ENCODE measurements at regions of chr5 and their contacts with region 1.

Region 1: DNA sequence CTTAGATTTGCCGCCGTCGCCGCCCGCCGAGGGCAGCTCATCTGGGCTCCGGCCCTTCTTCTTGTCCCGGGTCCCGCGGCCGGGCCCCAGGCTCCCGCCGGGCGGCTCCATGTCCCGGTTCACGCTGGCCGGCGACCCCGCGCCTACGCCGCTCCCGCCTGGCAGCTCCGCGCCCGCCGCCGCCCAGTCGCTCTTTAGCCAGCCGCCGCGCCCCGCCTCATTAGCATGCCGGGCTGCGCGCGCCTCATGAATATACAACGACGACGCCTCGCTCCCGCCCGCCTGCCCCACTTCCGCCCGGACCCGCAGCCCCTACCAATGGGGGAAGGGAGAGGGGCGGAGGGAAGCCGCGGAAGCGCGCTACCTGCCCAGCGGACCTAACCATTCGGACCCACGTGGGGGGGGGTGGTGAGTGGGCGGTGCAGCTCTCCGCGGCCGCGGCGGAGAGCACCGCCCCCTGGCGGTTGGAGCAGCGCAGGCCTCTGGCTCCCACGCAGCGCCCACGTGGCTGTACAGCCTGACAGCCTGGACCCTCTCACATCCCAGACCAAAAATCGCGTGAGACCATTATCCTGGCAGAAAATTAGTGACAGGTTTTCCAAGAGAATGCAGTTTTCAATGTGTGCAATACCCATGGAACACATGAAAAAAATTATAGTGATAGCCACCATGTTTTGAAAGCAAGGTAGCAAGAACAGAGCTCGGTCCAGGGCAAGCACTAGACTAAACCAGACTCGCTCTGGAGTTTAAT is at the start of gene DIAPH1:
- DNase-seq: peak; percentile 99
- H3K4me3 Mint-ChIP-seq: peak within 1 kb of the TSS; percentile 84
- H3K27ac Mint-ChIP-seq: peak within 1 kb of the TSS; percentile 95
- H3K4me1 Mint-ChIP-seq: peaks cover 19% of the 10 kb centered on the region
- H3K27me3 Mint-ChIP-seq: no peaks in the 10 kb centered on the region
- CTCF ChIP-seq: peak; percentile 98
- total RNA-seq, gene DIAPH1: 176 and 219 TPM in 2 replicates

Region 2: GRCh38 chr5:141543053-141543452 is 75.9 kb before region 1 on chr5:
- CTCF ChIA-PET with region 1: no interaction called
- intact Hi-C with region 1: no loop called
- DNase-seq: no peak
- H3K4me3 Mint-ChIP-seq: no peak overlapping the region
- H3K27ac Mint-ChIP-seq: no peak overlapping the region
- H3K4me1 Mint-ChIP-seq: no peaks in the 10 kb centered on the region
- H3K27me3 Mint-ChIP-seq: no peaks in the 10 kb centered on the region
- CTCF ChIP-seq: no peak

Region 3: DNA sequence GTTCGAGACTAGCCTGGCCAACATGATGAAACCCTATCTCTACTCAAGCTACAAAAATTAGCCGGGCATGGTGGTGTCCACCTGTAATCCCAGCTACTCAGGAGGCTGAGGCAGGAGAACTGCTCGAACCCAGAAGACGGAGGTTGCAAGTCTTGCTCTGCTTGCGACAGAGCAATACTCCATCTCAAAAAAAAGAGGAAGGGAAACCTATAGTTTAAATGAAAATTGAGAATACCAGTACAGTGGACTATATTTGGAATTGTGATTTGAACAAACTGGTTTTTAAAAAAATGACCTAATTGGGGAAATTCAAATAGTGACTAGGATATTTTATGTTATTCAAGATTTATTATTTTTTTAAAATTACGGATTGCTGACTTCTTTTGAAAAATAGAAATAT is 33.4 kb before region 1 on chr5:
- CTCF ChIA-PET with region 1: interaction called, 3 read pairs
- intact Hi-C with region 1: loop called (anchors 5 kb)
- DNase-seq: no peak
- H3K4me3 Mint-ChIP-seq: no peak overlapping the region
- H3K27ac Mint-ChIP-seq: no peak overlapping the region
- H3K4me1 Mint-ChIP-seq: peaks cover 3% of the 10 kb centered on the region
- H3K27me3 Mint-ChIP-seq: no peaks in the 10 kb centered on the region
- CTCF ChIP-seq: no peak

Region 4: DNA sequence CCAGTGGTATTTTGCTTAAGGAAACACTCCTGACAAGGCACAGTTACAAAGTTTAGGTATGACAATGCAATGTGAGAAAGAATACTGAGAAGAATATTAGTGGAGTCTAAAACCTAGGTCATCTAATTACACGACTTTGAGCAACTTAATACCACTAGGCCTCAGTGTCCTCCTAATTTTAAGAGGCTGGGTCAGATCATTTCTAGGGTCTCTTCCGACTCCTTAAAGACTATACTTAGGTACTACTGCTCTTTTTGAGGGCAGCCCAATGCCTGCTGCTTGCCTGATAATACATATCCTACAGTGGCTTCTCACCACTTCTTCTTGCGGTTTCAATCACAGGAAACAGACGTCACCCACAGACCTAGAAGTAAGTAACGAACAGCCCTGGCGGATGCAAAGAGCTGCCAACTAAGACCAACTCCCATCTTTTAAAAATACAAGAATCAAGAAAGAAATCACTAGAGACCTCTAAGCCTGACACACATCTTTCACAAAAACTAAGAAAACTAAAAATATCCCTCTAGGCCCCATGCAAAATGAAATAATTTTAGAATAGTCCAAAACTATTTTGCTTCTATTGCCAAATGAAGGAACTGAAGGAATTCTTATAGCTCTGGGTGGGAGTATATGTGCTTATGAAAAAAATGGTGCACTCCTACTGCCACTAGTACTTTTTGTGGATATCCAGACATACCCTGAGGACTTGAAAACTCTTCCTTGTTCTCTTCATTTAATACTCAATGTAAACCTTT is 13.3 kb before region 1 on chr5:
- CTCF ChIA-PET with region 1: interaction called, 7 read pairs
- intact Hi-C with region 1: loop called (anchors 1 kb)
- DNase-seq: no peak
- H3K4me3 Mint-ChIP-seq: no peak overlapping the region
- H3K27ac Mint-ChIP-seq: peak overlapping the region; percentile 22
- H3K4me1 Mint-ChIP-seq: peaks cover 47% of the 10 kb centered on the region
- H3K27me3 Mint-ChIP-seq: no peaks in the 10 kb centered on the region
- CTCF ChIP-seq: no peak

Region 5: DNA sequence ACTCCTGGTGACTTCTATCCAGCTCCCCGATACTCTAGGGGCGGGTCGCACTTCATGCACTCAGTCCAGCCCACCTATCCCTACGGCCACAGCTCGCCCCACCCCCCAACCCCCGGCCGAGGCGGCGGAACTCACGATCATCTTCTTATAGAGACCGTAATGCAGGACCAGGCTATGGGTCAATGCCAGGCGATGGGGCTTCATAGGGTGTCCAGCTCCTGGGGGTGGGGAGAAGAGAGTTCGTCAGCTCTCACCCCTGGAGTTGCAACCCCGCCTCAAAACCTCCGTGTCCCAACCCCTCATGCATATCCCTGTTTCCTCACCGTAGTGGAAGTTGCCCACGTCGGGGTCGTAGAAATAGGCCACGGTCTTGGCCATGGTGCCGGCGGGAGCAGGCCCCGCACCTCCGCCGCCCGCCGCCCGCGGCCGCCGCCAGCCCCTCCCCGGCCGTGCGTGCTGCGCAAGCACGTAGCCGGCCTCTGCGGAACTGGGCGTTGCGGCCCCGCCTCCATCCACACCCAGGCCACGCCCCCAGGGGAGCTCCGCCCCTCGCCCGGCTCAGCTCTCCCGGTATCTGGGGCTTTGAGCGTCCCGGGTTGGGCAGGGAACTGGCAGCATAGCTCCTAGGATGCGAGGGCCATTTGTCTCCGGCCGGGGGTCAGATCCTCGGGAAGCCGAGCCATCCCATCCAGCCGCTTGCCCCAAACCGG is 17.6 kb after region 1 on chr5 and contains the starts of genes HDAC3 and RELL2:
- CTCF ChIA-PET with region 1: interaction called, 25 read pairs
- intact Hi-C with region 1: no loop called
- DNase-seq: peak; percentile 99
- H3K4me3 Mint-ChIP-seq: peak within 1 kb of the TSS; percentile 79
- H3K27ac Mint-ChIP-seq: peak within 1 kb of the TSS; percentile 37
- H3K4me1 Mint-ChIP-seq: peaks cover 29% of the 10 kb centered on the region
- H3K27me3 Mint-ChIP-seq: no peaks in the 10 kb centered on the region
- CTCF ChIP-seq: no peak
- total RNA-seq, gene HDAC3: 96.3 and 102 TPM in 2 replicates
- total RNA-seq, gene RELL2: 12.5 and 12.6 TPM in 2 replicates

Measured in Calu3 (cell line).